PC-3 (cell line): ENCODE measurements at regions of chr20 and their contacts with region 1.

Region 1: GRCh38 chr20:33992923-33993575 is 662 bp upstream of the RALY start:
- DNase-seq: peak; percentile 97
- ATAC-seq: peak; percentile 76
- H3K4me3 ChIP-seq: peak overlapping the region; percentile 95
- H3K27ac ChIP-seq: peak overlapping the region; percentile 84
- H3K4me1 ChIP-seq: peaks cover 20% of the 10 kb centered on the region
- H3K27me3 ChIP-seq: no peaks in the 10 kb centered on the region
- CTCF ChIP-seq: no peak

Region 2: DNA sequence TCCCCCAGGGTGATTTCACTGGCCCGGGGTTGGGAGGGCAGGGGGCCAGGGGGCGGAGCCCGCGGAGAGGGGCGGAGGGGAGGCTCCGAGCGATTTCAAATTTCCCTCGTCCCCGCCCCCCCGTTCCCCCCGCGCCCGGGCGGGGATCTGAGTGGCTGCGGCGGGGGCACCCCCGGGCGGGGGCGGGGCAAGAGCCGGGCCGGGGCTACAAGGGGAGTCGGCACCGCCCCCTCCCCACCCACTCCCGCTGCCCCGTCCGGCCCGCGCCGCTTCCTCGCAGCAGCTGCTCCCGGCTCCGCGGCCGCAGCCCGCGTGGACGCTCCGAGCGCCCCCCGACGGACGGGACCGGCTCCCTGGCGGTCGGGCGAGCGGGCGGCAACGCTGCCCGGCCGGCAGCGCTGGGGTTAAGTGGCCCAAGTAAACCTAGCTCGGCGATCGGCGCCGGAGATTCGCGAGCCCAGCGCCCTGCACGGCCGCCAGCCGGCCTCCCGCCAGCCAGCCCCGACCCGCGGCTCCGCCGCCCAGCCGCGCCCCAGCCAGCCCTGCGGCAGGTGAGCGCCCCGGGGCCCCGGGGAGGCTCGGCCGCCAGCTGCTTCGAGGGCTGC is 1230.8 kb before region 1 on chr20 and contains the start of gene DNMT3B:
- CTCF ChIA-PET with region 1: no interaction called
- POLR2A ChIA-PET with region 1: interaction called, 30 read pairs
- intact Hi-C with region 1: no loop called
- DNase-seq: peak; percentile 88
- ATAC-seq: peak; percentile 79
- H3K4me3 ChIP-seq: peak within 1 kb of the TSS; percentile 98
- H3K27ac ChIP-seq: peak within 1 kb of the TSS; percentile 31; the same call in 1 of the 2 replicates
- H3K4me1 ChIP-seq: peaks cover 13% of the 10 kb centered on the region
- H3K27me3 ChIP-seq: no peaks in the 10 kb centered on the region
- CTCF ChIP-seq: 0 out of 2 replicates have a peak, but pooled peaks have one; percentile 13
- total RNA-seq, gene DNMT3B: 7.3 and 9.3 TPM in 2 replicates

Region 3: GRCh38 chr20:33846291-33846935 is 146.6 kb before region 1 on chr20:
- CTCF ChIA-PET with region 1: no interaction called
- POLR2A ChIA-PET with region 1: no interaction called
- intact Hi-C with region 1: no loop called
- DNase-seq: no peak
- ATAC-seq: no peak
- H3K4me3 ChIP-seq: no peak overlapping the region
- H3K27ac ChIP-seq: no peak overlapping the region
- H3K4me1 ChIP-seq: peaks cover 15% of the 10 kb centered on the region; the same call in 1 of the 2 replicates
- H3K27me3 ChIP-seq: no peaks in the 10 kb centered on the region
- CTCF ChIP-seq: no peak

Region 4: GRCh38 chr20:33897313-33897912 is 95.6 kb before region 1 on chr20:
- CTCF ChIA-PET with region 1: interaction called, 10 read pairs
- POLR2A ChIA-PET with region 1: no interaction called
- intact Hi-C with region 1: no loop called
- DNase-seq: peak; percentile 28
- ATAC-seq: 0 out of 2 replicates have a peak, but pooled peaks have one; percentile 24
- H3K4me3 ChIP-seq: no peak overlapping the region
- H3K27ac ChIP-seq: no peak overlapping the region
- H3K4me1 ChIP-seq: no peaks in the 10 kb centered on the region
- H3K27me3 ChIP-seq: peaks cover 8% of the 10 kb centered on the region; the same call in 1 of the 2 replicates
- CTCF ChIP-seq: peak; percentile 61

Region 5: GRCh38 chr20:34042262-34042661 is 49.2 kb after region 1 on chr20:
- CTCF ChIA-PET with region 1: no interaction called
- POLR2A ChIA-PET with region 1: interaction called, 10 read pairs
- intact Hi-C with region 1: no loop called
- DNase-seq: no peak
- ATAC-seq: no peak
- H3K4me3 ChIP-seq: no peak overlapping the region
- H3K27ac ChIP-seq: no peak overlapping the region
- H3K4me1 ChIP-seq: no peaks in the 10 kb centered on the region
- H3K27me3 ChIP-seq: no peaks in the 10 kb centered on the region
- CTCF ChIP-seq: no peak

Region 6: GRCh38 chr20:34111702-34112599 is 118.9 kb after region 1 on chr20 and contains the start of gene EIF2S2:
- CTCF ChIA-PET with region 1: no interaction called
- POLR2A ChIA-PET with region 1: interaction called, 4 read pairs
- intact Hi-C with region 1: loop called (anchors 1 kb)
- DNase-seq: peak; percentile 99
- ATAC-seq: peak; percentile 92
- H3K4me3 ChIP-seq: peak within 1 kb of the TSS; percentile 97
- H3K27ac ChIP-seq: peak within 1 kb of the TSS; percentile 68
- H3K4me1 ChIP-seq: peaks cover 27% of the 10 kb centered on the region; the same call in 1 of the 2 replicates
- H3K27me3 ChIP-seq: no peaks in the 10 kb centered on the region
- CTCF ChIP-seq: no peak
- total RNA-seq, gene EIF2S2: 75.4 and 83.4 TPM in 2 replicates

Region 7: GRCh38 chr20:34190679-34191090 is 197.6 kb after region 1 on chr20:
- CTCF ChIA-PET with region 1: no interaction called
- POLR2A ChIA-PET with region 1: no interaction called
- intact Hi-C with region 1: no loop called
- DNase-seq: peak; percentile 84
- ATAC-seq: peak; percentile 100
- H3K4me3 ChIP-seq: no peak overlapping the region
- H3K27ac ChIP-seq: no peak overlapping the region
- H3K4me1 ChIP-seq: no peaks in the 10 kb centered on the region
- H3K27me3 ChIP-seq: peaks cover 26% of the 10 kb centered on the region
- CTCF ChIP-seq: peak; percentile 91